Mammary epithelial cell (primary cell): ENCODE measurements at regions of chr5 and their contacts with region 1.

Region 1: GRCh38 chr5:148179234-148179824 is 11.0 kb downstream of the SPINK14 start:
- DNase-seq: peak; percentile 59
- H3K4me3 ChIP-seq: no peak overlapping the region
- H3K27ac ChIP-seq: no peak overlapping the region
- H3K4me1 ChIP-seq: no peaks in the 10 kb centered on the region
- H3K27me3 ChIP-seq: no peaks in the 10 kb centered on the region
- CTCF ChIP-seq: peak; percentile 76 to 79

Region 2: GRCh38 chr5:148224131-148224742 is 44.9 kb after region 1 on chr5:
- CTCF ChIA-PET with region 1: no interaction called
- dilution Hi-C with region 1: no loop called
- in situ Hi-C with region 1: no loop called
- intact Hi-C with region 1: no loop called
- DNase-seq: peak; percentile 93
- H3K4me3 ChIP-seq: no peak overlapping the region
- H3K27ac ChIP-seq: peak overlapping the region; percentile 19
- H3K4me1 ChIP-seq: no peaks in the 10 kb centered on the region
- H3K27me3 ChIP-seq: peaks cover 2% of the 10 kb centered on the region
- CTCF ChIP-seq: no peak

Region 3: GRCh38 chr5:148290271-148291195 is 111.2 kb after region 1 on chr5:
- CTCF ChIA-PET with region 1: no interaction called
- dilution Hi-C with region 1: no loop called
- in situ Hi-C with region 1: loop called in 1 of 2 experiments (anchors 25 kb)
- intact Hi-C with region 1: loop called (anchors 1 kb)
- DNase-seq: peak; percentile 32
- H3K4me3 ChIP-seq: no peak overlapping the region
- H3K27ac ChIP-seq: no peak overlapping the region
- H3K4me1 ChIP-seq: no peaks in the 10 kb centered on the region
- H3K27me3 ChIP-seq: peaks cover 2% of the 10 kb centered on the region
- CTCF ChIP-seq: peak; percentile 64 to 67

Region 4: DNA sequence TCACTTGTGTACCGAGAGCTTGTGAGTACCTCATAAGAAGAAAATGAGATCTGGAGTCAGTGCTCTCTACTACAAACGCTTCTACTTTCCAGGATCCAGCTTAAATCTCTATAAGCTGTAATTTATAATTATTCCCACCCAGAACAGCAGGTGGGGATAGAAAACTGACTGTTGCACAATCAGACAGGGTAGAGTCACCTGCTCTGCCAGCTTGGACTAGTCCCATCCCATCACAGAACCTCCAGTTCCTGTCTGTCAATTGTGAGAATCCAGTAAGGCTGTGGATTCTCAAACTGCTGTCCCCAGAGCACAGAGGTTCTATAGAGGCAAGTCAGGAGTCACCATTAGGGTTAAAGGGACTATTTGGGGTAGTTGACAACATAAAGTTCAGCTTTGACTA is 134.9 kb after region 1 on chr5:
- CTCF ChIA-PET with region 1: interaction called, 3 read pairs
- dilution Hi-C with region 1: no loop called
- in situ Hi-C with region 1: no loop called
- intact Hi-C with region 1: loop called (anchors 2 kb)
- DNase-seq: peak; percentile 46
- H3K4me3 ChIP-seq: no peak overlapping the region
- H3K27ac ChIP-seq: no peak overlapping the region
- H3K4me1 ChIP-seq: no peaks in the 10 kb centered on the region
- H3K27me3 ChIP-seq: no peaks in the 10 kb centered on the region
- CTCF ChIP-seq: peak in 1 of 2 donors; percentile 50

Region 5: DNA sequence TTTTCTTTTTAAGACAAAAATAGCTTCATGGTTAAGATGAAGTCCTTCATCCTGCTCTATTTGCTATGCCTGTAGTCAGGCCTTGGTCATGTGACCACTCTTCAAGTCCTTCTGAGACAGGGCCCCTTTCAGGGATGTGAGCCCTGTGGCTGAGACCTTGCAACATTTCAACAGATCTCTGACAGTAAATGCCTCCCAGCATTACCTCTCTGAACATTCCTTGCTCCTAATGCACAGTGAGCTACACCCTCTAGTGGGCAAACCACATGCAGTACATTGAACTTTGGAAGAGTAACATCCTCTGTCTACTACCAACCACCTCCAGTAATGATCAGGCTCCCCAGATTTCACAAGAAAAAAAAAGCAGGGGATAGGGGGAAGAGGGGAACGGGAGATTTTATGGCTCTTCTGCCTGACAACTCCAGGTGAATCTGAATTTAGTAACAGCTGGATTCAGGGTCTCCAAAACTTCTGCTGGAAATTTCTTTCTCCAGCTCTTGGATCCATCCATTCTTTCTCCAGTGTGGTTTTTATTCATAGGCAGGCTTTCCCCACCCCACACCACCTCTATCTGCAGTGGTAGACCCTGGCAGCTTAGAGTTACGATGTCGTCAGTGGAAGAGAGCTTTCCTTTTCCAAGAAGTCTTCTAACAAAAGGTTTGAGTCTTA is 195.5 kb after region 1 on chr5:
- CTCF ChIA-PET with region 1: interaction called, 6 read pairs
- dilution Hi-C with region 1: no loop called
- in situ Hi-C with region 1: loop called (anchors 5 kb)
- intact Hi-C with region 1: loop called (anchors 1 kb)
- DNase-seq: peak; percentile 67
- H3K4me3 ChIP-seq: no peak overlapping the region
- H3K27ac ChIP-seq: no peak overlapping the region
- H3K4me1 ChIP-seq: peaks cover 4% of the 10 kb centered on the region
- H3K27me3 ChIP-seq: no peaks in the 10 kb centered on the region
- CTCF ChIP-seq: peak; percentile 95 to 97

Region 6: GRCh38 chr5:148465381-148466235 is 286.3 kb after region 1 on chr5:
- CTCF ChIA-PET with region 1: no interaction called
- dilution Hi-C with region 1: no loop called
- in situ Hi-C with region 1: no loop called
- intact Hi-C with region 1: no loop called
- DNase-seq: no peak
- H3K4me3 ChIP-seq: no peak overlapping the region
- H3K27ac ChIP-seq: no peak overlapping the region
- H3K4me1 ChIP-seq: no peaks in the 10 kb centered on the region
- H3K27me3 ChIP-seq: no peaks in the 10 kb centered on the region
- CTCF ChIP-seq: no peak

Region 7: DNA sequence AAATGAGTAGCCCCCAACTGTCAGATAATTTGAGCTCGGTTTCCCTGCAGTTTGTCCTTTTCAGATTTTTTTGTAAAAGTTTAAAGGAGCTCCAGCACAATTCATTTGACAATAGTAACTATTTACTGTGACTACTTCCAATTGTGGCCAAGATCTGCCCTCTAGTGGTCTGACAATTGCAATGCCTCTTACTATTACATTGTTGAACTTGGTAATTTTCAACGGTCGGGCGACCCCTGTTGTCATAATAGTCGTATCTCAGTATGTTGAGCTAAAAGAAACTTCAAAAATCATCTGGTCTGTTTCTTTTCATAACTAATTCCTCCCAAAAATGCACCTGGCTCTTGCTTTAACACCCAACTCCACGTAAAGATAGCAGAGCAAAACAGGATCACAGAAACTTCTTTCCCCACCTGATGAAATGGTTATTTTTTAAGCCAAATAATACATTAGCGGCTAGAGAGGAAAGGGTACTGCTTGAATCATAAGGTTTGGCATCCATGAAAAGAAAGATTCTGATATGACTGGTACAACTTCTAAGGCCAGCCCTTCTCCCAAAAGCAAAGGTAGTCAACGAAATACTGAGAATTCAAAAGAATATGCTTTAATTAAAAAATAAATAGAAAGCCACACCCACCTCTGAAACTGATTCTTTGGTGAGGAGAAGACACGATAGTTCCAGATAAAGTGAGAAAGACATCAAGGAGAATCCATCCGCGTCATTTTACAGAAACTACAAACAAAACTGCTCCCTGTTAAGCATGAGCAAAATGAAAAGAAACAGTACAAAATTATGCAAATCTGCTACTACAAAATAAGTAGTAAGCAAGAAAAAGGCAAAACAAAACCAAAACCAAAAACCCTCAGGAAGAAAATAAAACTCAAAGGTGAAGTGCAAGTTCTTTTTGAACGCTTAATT is 551.9 kb after region 1 on chr5:
- CTCF ChIA-PET with region 1: no interaction called
- dilution Hi-C with region 1: no loop called
- in situ Hi-C with region 1: loop called in 1 of 2 experiments (anchors 25 kb)
- intact Hi-C with region 1: loop called (anchors 1 kb)
- DNase-seq: peak; percentile 64
- H3K4me3 ChIP-seq: peak overlapping the region in 1 of 3 experiments; percentile 4
- H3K27ac ChIP-seq: no peak overlapping the region
- H3K4me1 ChIP-seq: peaks cover 6% of the 10 kb centered on the region
- H3K27me3 ChIP-seq: no peaks in the 10 kb centered on the region
- CTCF ChIP-seq: peak; percentile 76 to 98

Region 8: GRCh38 chr5:149381987-149382340 is 1202.6 kb after region 1 on chr5:
- CTCF ChIA-PET with region 1: no interaction called
- dilution Hi-C with region 1: no loop called
- in situ Hi-C with region 1: no loop called
- intact Hi-C with region 1: no loop called
- DNase-seq: peak; percentile 49
- H3K4me3 ChIP-seq: no peak overlapping the region
- H3K27ac ChIP-seq: no peak overlapping the region
- H3K4me1 ChIP-seq: peaks cover 13% of the 10 kb centered on the region
- H3K27me3 ChIP-seq: no peaks in the 10 kb centered on the region
- CTCF ChIP-seq: peak; percentile 90 to 96